K562 (cell line): ENCODE measurements at regions of chr5 and their contacts with region 1.

Region 1: DNA sequence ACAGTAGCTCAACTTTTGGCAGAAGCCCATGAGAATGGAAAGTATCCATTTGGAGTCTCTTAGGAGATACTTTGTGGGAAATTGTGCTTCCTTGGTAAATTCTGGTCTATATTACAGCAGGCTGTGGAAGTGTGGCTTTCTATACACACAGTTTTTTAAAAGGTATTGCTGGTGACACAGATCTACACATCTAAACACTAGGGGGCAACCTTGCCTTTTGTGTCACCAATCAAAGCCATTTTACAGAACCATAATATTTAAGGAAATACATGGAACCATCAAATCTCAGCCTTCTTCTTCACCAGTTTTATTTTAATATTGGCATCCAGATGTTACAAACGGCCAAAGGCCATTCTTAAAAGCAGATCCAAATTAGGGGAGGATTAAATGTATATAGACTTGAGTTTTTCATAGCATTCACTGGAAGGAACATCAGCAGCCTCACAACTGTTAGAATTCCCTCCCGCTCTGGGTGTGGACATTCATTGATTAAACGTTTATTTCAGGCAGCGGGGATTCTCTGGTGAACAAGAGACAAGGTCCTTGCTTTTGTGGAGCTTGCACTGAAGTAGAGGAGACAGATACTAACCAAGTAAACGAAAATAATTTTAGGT is 132.4 kb upstream of the EPB41L4A start:
- DNase-seq: peak; percentile 43 to 75 (median 48)
- ATAC-seq: peak; percentile 43
- H3K4me3 ChIP-seq: no peak overlapping the region
- H3K27ac ChIP-seq: no peak overlapping the region
- H3K4me1 ChIP-seq: peaks cover 16 to 37% of the 10 kb centered on the region in 2 experiments
- H3K27me3 ChIP-seq: peaks cover 0 to 5% of the 10 kb centered on the region in 2 experiments; a peak in 1 of 5 replicates
- CTCF ChIP-seq: peak; percentile 51 to 88 (median 69); a peak in 5 of 6 replicates
- EP300 ChIP-seq: no peak
- POLR2A ChIP-seq: no peak
- RAD21 ChIP-seq: peak; percentile 94 to 95

Region 2: GRCh38 chr5:112604732-112605630 is 53.5 kb after region 1 on chr5:
- CTCF ChIA-PET with region 1: interaction called, 13 read pairs
- POLR2A ChIA-PET with region 1: no interaction called
- in situ Hi-C with region 1: no loop called
- intact Hi-C with region 1: loop called (anchors 1 kb)
- DNase-seq: peak in 3 of 4 experiments; percentile 17 to 58 (median 43)
- ATAC-seq: peak; percentile 97
- H3K4me3 ChIP-seq: no peak overlapping the region
- H3K27ac ChIP-seq: no peak overlapping the region
- H3K4me1 ChIP-seq: no peaks in the 10 kb centered on the region
- H3K27me3 ChIP-seq: peaks cover 0 to 17% of the 10 kb centered on the region in 2 experiments; a peak in 3 of 5 replicates
- CTCF ChIP-seq: peak; percentile 59 to 77 (median 63)
- EP300 ChIP-seq: no peak
- POLR2A ChIP-seq: no peak
- RAD21 ChIP-seq: peak; percentile 65 to 83

Region 3: DNA sequence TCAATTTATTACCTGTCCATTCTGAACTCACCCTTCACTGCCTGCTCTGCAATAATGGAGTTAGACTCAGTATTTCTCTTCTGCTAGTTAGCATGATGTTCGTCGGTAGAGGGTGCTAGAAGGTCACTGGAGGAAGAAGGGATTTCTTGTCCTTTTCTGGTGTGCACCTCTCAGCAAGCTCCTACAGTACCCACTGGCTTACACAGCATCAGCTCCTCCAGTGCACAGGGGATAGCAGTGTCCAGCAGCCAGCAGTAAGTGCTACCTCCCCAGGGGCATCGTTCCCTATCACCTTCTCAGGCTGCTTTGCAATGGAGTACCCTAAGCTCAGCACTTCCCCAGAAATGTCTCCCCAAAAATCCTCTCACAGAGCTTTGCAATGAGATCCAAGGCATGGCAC is 140.2 kb after region 1 on chr5:
- CTCF ChIA-PET with region 1: no interaction called
- POLR2A ChIA-PET with region 1: interaction called, 3 read pairs
- in situ Hi-C with region 1: no loop called
- intact Hi-C with region 1: loop called (anchors 1 kb)
- DNase-seq: peak; percentile 44 to 82 (median 56)
- ATAC-seq: peak; percentile 86
- H3K4me3 ChIP-seq: no peak overlapping the region
- H3K27ac ChIP-seq: no peak overlapping the region
- H3K4me1 ChIP-seq: peaks cover 0 to 33% of the 10 kb centered on the region in 2 experiments; a peak in 3 of 5 replicates
- H3K27me3 ChIP-seq: no peaks in the 10 kb centered on the region
- CTCF ChIP-seq: peak; percentile 74 to 83 (median 79)
- EP300 ChIP-seq: no peak
- POLR2A ChIP-seq: no peak
- RAD21 ChIP-seq: peak; percentile 58 to 91

Region 4: DNA sequence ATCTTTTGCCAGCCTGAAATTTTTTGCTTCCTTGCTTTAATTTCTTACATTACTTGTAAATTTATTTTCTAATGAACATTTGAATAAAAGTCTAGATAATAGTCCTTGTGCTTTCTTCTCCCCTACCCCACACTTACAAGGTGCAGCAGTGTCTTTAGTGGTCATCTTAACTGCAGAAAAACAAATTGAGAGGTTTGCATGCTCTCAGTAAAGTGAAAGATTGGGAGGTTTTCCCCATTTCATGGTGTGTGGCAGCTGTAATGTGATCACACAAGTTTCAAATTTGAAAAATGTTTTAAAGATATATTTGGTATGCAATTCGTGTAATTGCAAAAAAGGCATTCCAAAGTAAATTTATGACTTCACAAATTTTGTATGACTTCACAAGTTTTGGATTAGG is 200.8 kb after region 1 on chr5:
- CTCF ChIA-PET with region 1: interaction called, 28 read pairs
- POLR2A ChIA-PET with region 1: no interaction called
- in situ Hi-C with region 1: loop called (anchors 5 kb)
- intact Hi-C with region 1: loop called (anchors 1 kb)
- DNase-seq: no peak
- ATAC-seq: no peak
- H3K4me3 ChIP-seq: no peak overlapping the region
- H3K27ac ChIP-seq: no peak overlapping the region
- H3K4me1 ChIP-seq: 0 out of 5 replicates have a peak, but pooled peaks cover 0 to 3% of the 10 kb centered on the region in 2 experiments
- H3K27me3 ChIP-seq: no peaks in the 10 kb centered on the region
- CTCF ChIP-seq: no peak
- EP300 ChIP-seq: no peak
- POLR2A ChIP-seq: no peak
- RAD21 ChIP-seq: no peak

Region 5: DNA sequence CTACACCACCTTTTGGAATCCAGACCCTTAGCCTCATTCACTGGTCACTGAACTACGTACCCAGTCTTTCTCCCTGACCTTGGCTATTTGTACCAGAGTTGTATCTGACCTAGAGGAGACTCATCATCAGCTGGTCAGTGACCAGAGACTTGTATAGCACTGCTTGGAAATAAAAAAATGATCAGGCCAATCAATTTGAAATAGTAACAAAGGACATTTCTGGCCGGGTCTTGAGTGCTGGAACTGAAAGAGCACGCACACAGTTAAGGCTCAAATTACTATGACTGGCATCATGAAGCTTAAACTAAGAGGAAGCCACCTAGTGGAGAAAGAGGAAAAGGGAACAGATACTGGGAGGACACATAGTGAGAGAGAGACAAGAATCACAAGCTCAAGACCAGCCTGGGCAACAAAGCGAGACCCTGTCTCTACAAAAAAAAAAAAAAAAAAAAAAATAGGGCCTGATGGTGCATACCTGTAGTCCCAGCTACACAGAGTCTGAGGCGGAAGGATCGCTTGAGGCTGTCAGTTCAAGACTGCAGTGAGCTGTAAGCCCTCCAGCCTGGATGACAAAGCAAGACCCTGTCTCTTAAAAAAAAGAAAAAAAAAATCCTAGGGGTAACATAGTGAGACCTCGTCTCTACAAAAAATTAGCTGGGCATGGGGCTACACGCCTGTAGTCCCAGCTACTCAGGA is 296.7 kb after region 1 on chr5:
- CTCF ChIA-PET with region 1: no interaction called
- POLR2A ChIA-PET with region 1: no interaction called
- in situ Hi-C with region 1: no loop called
- intact Hi-C with region 1: loop called (anchors 5 kb)
- DNase-seq: peak; percentile 33 to 80 (median 54)
- ATAC-seq: peak; percentile 99
- H3K4me3 ChIP-seq: no peak overlapping the region
- H3K27ac ChIP-seq: peak overlapping the region; percentile 4; the same call in 1 of the 3 replicates
- H3K4me1 ChIP-seq: peaks cover 0 to 4% of the 10 kb centered on the region in 2 experiments; a peak in 1 of 5 replicates
- H3K27me3 ChIP-seq: no peaks in the 10 kb centered on the region
- CTCF ChIP-seq: peak; percentile 55 to 78 (median 72); a peak in 5 of 6 replicates
- EP300 ChIP-seq: no peak
- POLR2A ChIP-seq: no peak
- RAD21 ChIP-seq: peak in 1 of 2 experiments; percentile 68; a peak in 2 of 4 replicates

Region 6: GRCh38 chr5:112976432-112977309 is 425.1 kb after region 1 on chr5 and contains the start of gene DCP2:
- CTCF ChIA-PET with region 1: interaction called, 3 read pairs
- POLR2A ChIA-PET with region 1: no interaction called
- in situ Hi-C with region 1: no loop called
- intact Hi-C with region 1: loop called (anchors 10 kb)
- DNase-seq: peak; percentile 95 to 99 (median 98)
- ATAC-seq: peak; percentile 88
- H3K4me3 ChIP-seq: peak within 1 kb of the TSS; percentile 64
- H3K27ac ChIP-seq: peak within 1 kb of the TSS; percentile 86
- H3K4me1 ChIP-seq: peaks cover 17 to 36% of the 10 kb centered on the region in 2 experiments
- H3K27me3 ChIP-seq: no peaks in the 10 kb centered on the region
- CTCF ChIP-seq: no peak
- EP300 ChIP-seq: no peak; the same call in 1 of the 2 replicates
- POLR2A ChIP-seq: peak; percentile 97
- RAD21 ChIP-seq: no peak
- polyA plus RNA-seq, gene DCP2: 25.9 to 36.8 TPM